Activated CD4-positive, alpha-beta T cell treated with anti-CD3 and anti-CD28 coated beads for 36 hours (primary cell): ENCODE measurements at regions of chr20 and their contacts with region 1.

Region 1: DNA sequence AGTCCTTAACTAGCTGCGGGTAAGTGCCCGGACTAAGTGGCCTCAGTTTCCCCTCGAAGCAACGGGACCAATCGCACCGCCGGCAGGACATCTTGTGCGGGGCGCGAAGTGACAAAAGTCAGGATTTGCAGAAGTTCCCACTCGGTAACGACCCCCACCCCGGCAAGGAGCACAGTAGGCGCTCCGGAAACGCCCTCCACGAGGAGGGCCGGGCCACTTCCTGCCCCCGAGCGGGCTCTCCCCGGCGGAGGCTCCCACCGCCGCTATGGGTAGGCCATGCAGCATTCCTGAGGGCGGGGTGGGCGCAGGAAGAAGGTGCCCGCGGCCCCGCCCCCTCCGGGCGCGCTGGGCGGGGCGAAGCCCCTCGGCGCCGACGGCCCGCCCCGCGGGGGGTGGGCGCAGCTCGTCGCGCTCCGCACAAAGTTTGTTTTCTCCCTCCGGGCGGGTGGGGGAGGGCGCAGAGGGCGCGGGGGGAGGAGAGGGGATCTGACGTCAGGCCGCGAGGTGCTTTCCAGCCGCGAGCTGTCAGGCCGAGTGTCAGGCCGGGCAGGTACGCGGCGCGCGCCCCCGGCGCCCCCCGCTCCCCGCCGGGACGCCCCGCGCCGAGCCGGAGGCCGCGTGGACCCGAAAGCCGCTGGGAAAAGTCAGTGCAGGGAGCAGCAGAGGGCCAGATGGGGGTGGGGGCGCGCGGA is at the start of gene TGIF2:
- DNase-seq: peak; percentile 95
- ATAC-seq: peak; percentile 75
- H3K4me3 Mint-ChIP-seq: peak within 1 kb of the TSS; percentile 88
- H3K27ac Mint-ChIP-seq: peak within 1 kb of the TSS; percentile 93
- H3K4me1 Mint-ChIP-seq: peaks cover 35% of the 10 kb centered on the region
- H3K27me3 Mint-ChIP-seq: no peaks in the 10 kb centered on the region
- total RNA-seq, gene TGIF2: 44.9 to 48.7 TPM

Region 2: GRCh38 chr20:35741892-35742740 is 831.1 kb before region 1 on chr20 and contains the start of gene RBM39:
- CTCF ChIA-PET with region 1: no interaction called
- POLR2A ChIA-PET with region 1: no interaction called
- intact Hi-C with region 1: loop called in 1 of 2 experiments (anchors 1 kb)
- DNase-seq: peak; percentile 100
- ATAC-seq: peak; percentile 88
- H3K4me3 Mint-ChIP-seq: peak within 1 kb of the TSS; percentile 90
- H3K27ac Mint-ChIP-seq: peak within 1 kb of the TSS; percentile 100
- H3K4me1 Mint-ChIP-seq: peaks cover 45% of the 10 kb centered on the region
- H3K27me3 Mint-ChIP-seq: no peaks in the 10 kb centered on the region
- total RNA-seq, gene RBM39: 303 to 356 TPM

Region 3: DNA sequence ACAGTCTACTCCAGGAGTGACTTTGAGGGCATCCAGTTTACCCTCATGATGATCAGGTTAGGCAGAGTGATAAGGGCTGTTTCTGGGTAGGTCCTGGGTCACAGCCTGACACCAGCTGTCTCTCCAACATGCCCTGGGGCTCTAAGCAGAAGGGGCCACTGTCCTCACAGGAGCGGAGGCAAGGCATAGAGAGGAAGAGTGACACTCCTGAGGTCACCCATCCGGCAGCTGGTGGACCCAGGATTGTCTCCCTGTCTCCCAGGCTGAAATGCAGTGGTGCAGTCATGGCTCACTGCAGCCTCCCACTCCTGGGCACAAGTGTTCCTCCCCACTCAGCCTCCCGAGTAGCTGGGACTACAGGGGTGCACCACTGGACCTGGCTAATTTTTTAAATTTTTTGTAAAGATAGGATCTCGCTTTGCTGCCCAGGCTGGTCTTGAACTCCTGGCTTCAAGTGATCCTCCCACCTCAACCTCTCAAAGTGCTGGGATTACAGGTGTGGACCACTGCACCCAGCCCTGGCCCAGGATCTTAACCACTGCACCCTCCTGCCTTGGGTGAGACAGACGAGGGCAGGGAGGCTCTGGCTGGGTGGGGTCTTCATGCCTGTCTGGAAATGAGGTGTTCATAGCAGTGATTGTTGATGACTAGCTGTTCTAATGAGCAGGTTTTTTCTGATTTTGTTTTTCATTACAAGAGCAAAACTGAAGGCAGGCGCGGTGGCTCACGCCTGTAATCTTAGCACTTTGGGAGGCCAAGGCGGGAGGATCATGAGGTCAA is 254.9 kb before region 1 on chr20:
- CTCF ChIA-PET with region 1: no interaction called
- POLR2A ChIA-PET with region 1: no interaction called
- intact Hi-C with region 1: no loop called
- DNase-seq: no peak
- ATAC-seq: no peak
- H3K4me3 Mint-ChIP-seq: no peak overlapping the region
- H3K27ac Mint-ChIP-seq: no peak overlapping the region
- H3K4me1 Mint-ChIP-seq: no peaks in the 10 kb centered on the region
- H3K27me3 Mint-ChIP-seq: peaks cover 10% of the 10 kb centered on the region

Region 4: DNA sequence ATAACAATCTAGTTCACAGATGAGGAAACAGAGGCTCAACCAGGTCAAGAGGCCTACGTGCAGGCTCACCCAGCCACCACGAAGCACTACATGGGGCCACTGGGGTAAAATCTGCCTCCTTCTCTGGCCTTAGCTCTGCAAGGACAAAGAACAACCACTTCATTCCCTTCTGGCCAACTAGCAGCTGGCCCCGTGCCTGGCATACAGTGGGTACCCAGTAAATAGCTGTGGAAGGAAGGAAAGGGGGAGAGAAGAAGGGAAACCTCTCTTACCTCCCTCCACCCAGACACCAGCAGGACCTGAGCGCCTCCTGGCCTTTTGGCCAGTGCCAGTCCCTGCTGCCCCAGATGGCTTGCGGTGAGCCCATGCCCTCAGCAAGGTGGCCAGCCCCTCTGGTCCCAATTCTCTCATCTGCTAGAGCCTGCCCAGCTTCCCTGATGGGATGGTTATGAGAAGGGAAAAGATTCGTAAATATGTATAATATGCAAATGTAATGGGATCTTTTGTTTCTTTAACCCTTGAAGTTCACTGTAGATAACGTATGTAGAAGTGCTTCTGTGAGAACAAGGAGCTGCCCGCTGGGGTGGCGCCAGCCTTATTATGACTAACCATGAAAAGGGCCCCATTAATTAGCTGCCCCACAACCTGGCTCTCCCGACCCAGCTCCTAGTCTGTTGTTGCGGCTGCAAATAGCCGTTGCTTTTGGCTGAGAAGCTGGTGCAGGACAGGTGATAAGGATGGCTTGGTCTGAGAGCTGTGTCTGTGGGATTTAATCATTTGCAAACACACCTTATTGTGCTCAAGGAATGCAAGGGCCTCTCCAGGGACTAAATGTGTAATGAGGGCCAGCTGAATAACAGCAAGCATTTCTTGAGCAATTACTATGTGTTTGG is 205.1 kb before region 1 on chr20:
- CTCF ChIA-PET with region 1: no interaction called
- POLR2A ChIA-PET with region 1: no interaction called
- intact Hi-C with region 1: no loop called
- DNase-seq: no peak
- ATAC-seq: no peak
- H3K4me3 Mint-ChIP-seq: no peak overlapping the region
- H3K27ac Mint-ChIP-seq: no peak overlapping the region
- H3K4me1 Mint-ChIP-seq: no peaks in the 10 kb centered on the region
- H3K27me3 Mint-ChIP-seq: peaks cover 2% of the 10 kb centered on the region

Region 5: DNA sequence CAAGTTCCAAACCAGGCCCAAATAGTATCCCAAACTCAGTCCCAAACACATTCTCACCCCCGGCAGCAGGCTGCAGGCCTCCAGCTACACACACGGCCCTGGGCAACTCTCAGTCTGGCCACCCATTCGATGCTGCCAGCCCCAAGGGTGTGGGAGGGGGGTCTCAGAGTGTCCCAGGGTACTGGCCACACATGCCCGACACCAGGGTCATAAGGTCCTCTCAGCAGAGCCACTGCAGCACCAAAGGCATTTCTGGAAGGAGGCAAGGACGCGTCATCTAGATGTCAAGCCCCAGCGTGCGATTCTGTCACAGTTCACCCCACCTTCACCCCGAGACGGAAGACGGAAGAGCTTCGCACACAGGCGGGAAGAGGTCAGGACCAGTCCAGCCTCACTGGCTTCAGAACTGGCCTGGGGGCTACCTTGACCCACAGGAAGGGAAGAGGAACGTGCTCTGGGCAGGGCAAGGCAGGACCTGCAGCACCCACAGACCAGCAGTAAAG is 22.4 kb before region 1 on chr20:
- CTCF ChIA-PET with region 1: no interaction called
- POLR2A ChIA-PET with region 1: no interaction called
- intact Hi-C with region 1: loop called (anchors 1 to 2 kb)
- DNase-seq: no peak
- ATAC-seq: no peak
- H3K4me3 Mint-ChIP-seq: no peak overlapping the region
- H3K27ac Mint-ChIP-seq: no peak overlapping the region
- H3K4me1 Mint-ChIP-seq: no peaks in the 10 kb centered on the region
- H3K27me3 Mint-ChIP-seq: no peaks in the 10 kb centered on the region

Region 6: GRCh38 chr20:36645998-36646397 is 72.7 kb after region 1 on chr20 and contains the start of gene SLA2:
- CTCF ChIA-PET with region 1: no interaction called
- POLR2A ChIA-PET with region 1: interaction called, 4 read pairs
- intact Hi-C with region 1: loop called in 1 of 2 experiments (anchors 1 kb)
- DNase-seq: peak; percentile 79
- ATAC-seq: peak; percentile 62
- H3K4me3 Mint-ChIP-seq: peak within 1 kb of the TSS; percentile 81
- H3K27ac Mint-ChIP-seq: peak within 1 kb of the TSS; percentile 99
- H3K4me1 Mint-ChIP-seq: peaks cover 41% of the 10 kb centered on the region
- H3K27me3 Mint-ChIP-seq: no peaks in the 10 kb centered on the region
- total RNA-seq, gene SLA2: 48.7 to 52.6 TPM

Region 7: DNA sequence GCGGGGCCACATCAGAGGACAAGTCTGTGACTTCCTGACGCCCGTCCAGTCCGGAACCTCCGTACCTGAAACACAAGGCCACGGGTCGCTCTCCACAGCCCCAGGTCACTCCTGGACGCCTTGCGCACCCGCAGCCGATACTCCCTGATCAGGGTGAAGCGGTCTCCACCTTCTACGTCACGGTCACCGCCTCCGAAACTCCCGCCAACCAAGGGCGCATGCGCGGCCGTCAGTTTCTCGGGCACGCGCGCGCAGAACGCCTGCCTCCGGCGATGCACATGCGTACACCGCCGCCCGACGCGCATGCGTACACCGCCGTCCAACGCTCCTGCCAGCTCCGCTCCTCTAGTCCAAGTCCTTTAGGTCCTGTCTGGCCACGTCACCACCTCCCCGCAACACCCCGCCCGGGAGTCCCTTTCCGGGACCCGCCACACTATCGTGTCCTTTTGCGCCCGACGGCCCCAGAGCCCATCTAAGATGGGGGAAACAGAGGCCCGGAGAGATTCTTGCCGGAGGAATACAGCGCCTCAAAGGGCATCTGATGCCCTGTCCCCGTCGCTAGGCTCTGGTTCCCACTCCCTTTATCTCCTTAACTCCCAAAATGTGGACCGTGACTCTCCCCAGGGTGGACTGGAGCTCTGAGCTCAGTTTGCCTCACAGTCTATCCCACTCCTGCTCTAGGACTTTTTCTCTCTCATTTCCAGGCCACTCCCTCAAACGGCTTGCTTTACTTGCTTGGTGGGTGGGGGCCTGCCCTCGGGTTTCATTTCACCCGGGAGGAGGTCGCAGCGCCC is 200.5 kb after region 1 on chr20 and contains the start of gene DSN1:
- CTCF ChIA-PET with region 1: no interaction called
- POLR2A ChIA-PET with region 1: no interaction called
- intact Hi-C with region 1: loop called in 1 of 2 experiments (anchors 1 kb)
- DNase-seq: peak; percentile 99
- ATAC-seq: peak; percentile 91
- H3K4me3 Mint-ChIP-seq: peak within 1 kb of the TSS; percentile 79
- H3K27ac Mint-ChIP-seq: peak within 1 kb of the TSS; percentile 97
- H3K4me1 Mint-ChIP-seq: peaks cover 13% of the 10 kb centered on the region
- H3K27me3 Mint-ChIP-seq: no peaks in the 10 kb centered on the region
- total RNA-seq, gene DSN1: 20.4 to 20.7 TPM

Region 8: GRCh38 chr20:37095599-37096414 is 522.6 kb after region 1 on chr20 and contains the start of gene RBL1:
- CTCF ChIA-PET with region 1: no interaction called
- POLR2A ChIA-PET with region 1: no interaction called
- intact Hi-C with region 1: loop called in 1 of 2 experiments (anchors 1 kb)
- DNase-seq: peak; percentile 94
- ATAC-seq: peak; percentile 83
- H3K4me3 Mint-ChIP-seq: peak within 1 kb of the TSS; percentile 95
- H3K27ac Mint-ChIP-seq: peak within 1 kb of the TSS; percentile 100
- H3K4me1 Mint-ChIP-seq: peaks cover 26% of the 10 kb centered on the region
- H3K27me3 Mint-ChIP-seq: no peaks in the 10 kb centered on the region
- total RNA-seq, gene RBL1: 39.5 to 43.2 TPM